ENCODE measurements at regions of chr1 and their contacts with region 1.

Region 1: GRCh38 chr1:164712131-164713036 is 153.4 kb downstream of the PBX1 start:
- DNase-seq: peak; percentile 93 to 97 (median 96)
- H3K4me3 ChIP-seq: peak overlapping the region in 3 of 7 experiments; percentile 6 to 14 (median 6)
- H3K27ac ChIP-seq: no peak overlapping the region
- H3K4me1 ChIP-seq: peaks cover 3 to 66% (median 22%) of the 10 kb centered on the region in 4 experiments
- H3K27me3 ChIP-seq: peaks cover 0 to 17% (median 0%) of the 10 kb centered on the region in 5 experiments

Region 2: GRCh38 chr1:164651351-164651951 is 60.9 kb before region 1 on chr1:
- CTCF ChIA-PET with region 1: no interaction called
- POLR2A ChIA-PET with region 1: interaction called, 11 read pairs
- DNase-seq: peak; percentile 91 to 97 (median 95)
- H3K4me3 ChIP-seq: peak overlapping the region in 4 of 7 experiments; percentile 38 to 72 (median 57)
- H3K27ac ChIP-seq: no peak overlapping the region
- H3K4me1 ChIP-seq: peaks cover 0 to 18% (median 10%) of the 10 kb centered on the region in 4 experiments
- H3K27me3 ChIP-seq: no peaks in the 10 kb centered on the region